Endothelial cell of umbilical vein (primary cell): ENCODE measurements at regions of chr2 and their contacts with region 1.

Region 1: DNA sequence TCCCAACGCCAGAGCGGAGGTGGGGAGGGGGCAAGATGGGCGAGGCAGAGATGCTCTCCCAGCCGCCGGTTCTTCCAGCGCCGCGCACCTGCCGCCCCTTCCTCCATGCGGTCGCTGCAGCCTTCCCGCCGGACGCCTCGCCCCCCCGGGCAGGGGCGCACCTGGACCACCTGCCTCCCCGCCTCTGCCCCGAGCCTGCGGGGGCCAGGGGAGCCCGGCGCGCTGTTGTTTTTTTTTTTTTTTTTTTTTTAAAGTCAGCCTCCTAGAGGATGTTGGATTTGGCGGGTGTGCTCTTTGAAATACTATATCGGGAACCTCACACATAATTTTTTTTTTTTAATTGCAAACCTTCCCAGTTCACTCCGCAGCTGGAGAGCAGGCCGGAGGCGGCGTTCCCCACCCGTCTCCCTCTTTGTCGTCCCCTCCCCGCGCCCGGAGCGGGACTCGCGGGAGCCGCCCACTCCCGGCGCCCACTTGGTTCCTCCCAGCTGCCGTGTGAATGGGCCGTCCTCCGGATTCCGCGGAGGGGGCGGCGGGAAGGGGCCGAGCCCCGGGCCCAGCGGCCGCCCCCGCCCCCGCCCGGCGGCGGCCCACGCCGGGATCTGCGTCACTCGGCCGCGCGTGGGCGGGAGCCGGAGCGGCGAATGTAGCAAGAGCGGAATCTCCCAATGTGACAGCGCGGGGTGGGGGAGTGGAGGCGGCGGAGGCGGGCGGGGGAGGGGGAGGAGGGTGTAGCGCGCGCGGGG is 421 bp upstream of the NAB1 start:
- DNase-seq: peak; percentile 83
- H3K4me3 ChIP-seq: peak overlapping the region; percentile 72 to 92 (median 77)
- H3K27ac ChIP-seq: peak overlapping the region; percentile 52
- H3K4me1 ChIP-seq: peaks cover 23% of the 10 kb centered on the region
- H3K27me3 ChIP-seq: no peaks in the 10 kb centered on the region
- CTCF ChIP-seq: no peak
- POLR2A ChIP-seq: peak; percentile 38

Region 2: GRCh38 chr2:190382851-190383250 is 265.6 kb before region 1 on chr2:
- CTCF ChIA-PET with region 1: no interaction called
- POLR2A ChIA-PET with region 1: no interaction called
- dilution Hi-C with region 1: no loop called
- intact Hi-C with region 1: no loop called
- DNase-seq: peak; percentile 66
- H3K4me3 ChIP-seq: no peak overlapping the region
- H3K27ac ChIP-seq: no peak overlapping the region
- H3K4me1 ChIP-seq: no peaks in the 10 kb centered on the region
- H3K27me3 ChIP-seq: peaks cover 0 to 4% of the 10 kb centered on the region in 2 experiments
- CTCF ChIP-seq: peak; percentile 21 to 35
- POLR2A ChIP-seq: no peak

Region 3: DNA sequence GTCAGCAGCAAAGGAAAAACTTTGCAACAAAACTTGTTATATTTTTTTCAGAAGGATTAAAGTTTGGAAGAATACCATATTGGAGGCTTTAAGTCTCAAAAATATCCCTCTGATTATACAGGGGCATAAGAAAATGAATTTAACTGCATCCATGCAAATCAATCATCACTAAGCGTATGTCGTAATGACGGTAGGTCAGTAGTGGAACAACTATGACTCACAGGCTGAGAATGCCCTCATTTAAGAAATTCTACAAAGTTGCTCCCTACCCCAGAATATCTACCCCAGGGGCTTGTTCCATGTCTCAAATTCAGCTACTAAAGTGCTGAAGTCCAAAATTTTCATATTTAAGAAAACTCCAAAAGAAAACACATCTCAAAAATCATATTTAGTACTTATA is 12.1 kb before region 1 on chr2:
- CTCF ChIA-PET with region 1: interaction called, 5 read pairs
- POLR2A ChIA-PET with region 1: no interaction called
- dilution Hi-C with region 1: no loop called
- intact Hi-C with region 1: loop called (anchors 1 kb)
- DNase-seq: peak; percentile 70
- H3K4me3 ChIP-seq: no peak overlapping the region
- H3K27ac ChIP-seq: peak overlapping the region; percentile 22
- H3K4me1 ChIP-seq: peaks cover 12% of the 10 kb centered on the region
- H3K27me3 ChIP-seq: no peaks in the 10 kb centered on the region
- CTCF ChIP-seq: no peak
- POLR2A ChIP-seq: no peak

Region 4: DNA sequence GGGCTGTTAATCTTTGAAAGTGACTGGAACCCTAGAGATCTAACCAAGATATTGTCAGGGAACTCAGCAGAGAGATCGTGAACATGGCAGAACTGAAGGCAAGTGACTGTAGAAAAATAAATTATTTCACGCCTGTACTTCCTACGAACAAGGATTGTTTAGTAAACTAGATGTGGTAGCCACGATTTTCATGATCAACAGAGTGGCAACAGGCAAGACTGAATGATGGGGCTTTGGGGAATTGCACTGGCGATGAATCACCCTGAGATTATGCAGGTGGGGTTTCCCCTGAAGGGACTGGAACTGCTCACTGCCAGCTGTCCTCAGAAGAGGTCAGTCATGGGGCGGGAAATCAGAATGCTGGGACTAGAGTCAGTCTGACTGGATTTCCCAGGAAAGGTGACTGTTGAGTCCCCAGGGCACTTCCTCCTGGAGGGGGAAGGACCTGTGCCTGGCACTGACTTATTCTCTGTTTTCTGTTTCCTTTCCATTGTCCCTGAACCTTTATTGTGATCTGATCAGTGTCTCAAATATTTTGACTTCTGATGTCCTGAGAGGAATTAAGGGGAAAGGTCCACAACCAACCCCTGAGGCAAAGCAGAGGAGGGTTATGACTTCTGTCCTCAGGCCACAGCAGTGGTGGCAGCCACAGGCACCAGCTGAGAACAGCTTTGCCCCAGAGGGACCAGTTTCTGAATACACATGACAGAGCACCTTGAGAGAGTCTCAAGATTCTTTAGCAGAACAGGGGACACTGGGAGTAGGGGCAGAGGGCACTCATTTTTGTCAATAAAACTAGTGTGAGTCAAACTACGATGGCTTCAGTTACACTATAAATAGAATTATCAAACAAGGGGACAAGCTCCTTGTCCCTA is 70.4 kb after region 1 on chr2:
- CTCF ChIA-PET with region 1: no interaction called
- POLR2A ChIA-PET with region 1: no interaction called
- dilution Hi-C with region 1: no loop called
- intact Hi-C with region 1: loop called (anchors 2 kb)
- DNase-seq: peak; percentile 85
- H3K4me3 ChIP-seq: no peak overlapping the region
- H3K27ac ChIP-seq: peak overlapping the region; percentile 89
- H3K4me1 ChIP-seq: peaks cover 42% of the 10 kb centered on the region
- H3K27me3 ChIP-seq: no peaks in the 10 kb centered on the region
- CTCF ChIP-seq: no peak
- POLR2A ChIP-seq: no peak

Region 5: GRCh38 chr2:190804182-190804795 is 155.8 kb after region 1 on chr2:
- CTCF ChIA-PET with region 1: no interaction called
- POLR2A ChIA-PET with region 1: no interaction called
- dilution Hi-C with region 1: no loop called
- intact Hi-C with region 1: loop called (anchors 5 kb)
- DNase-seq: peak; percentile 74
- H3K4me3 ChIP-seq: no peak overlapping the region
- H3K27ac ChIP-seq: no peak overlapping the region
- H3K4me1 ChIP-seq: peaks cover 2% of the 10 kb centered on the region
- H3K27me3 ChIP-seq: peaks cover 0 to 3% of the 10 kb centered on the region in 2 experiments
- CTCF ChIP-seq: peak; percentile 36 to 40
- POLR2A ChIP-seq: no peak